ENCODE measurements at regions of chr1 and their contacts with region 1.

Region 1: GRCh38 chr1:8825985-8826481 is 8.6 kb upstream of the RERE start:
- DNase-seq: no peak
- ATAC-seq: no peak
- H3K4me3 ChIP-seq: no peak overlapping the region
- H3K27ac ChIP-seq: peak overlapping the region; percentile 57; the same call in 1 of the 2 replicates
- H3K4me1 ChIP-seq: peaks cover 31% of the 10 kb centered on the region
- H3K27me3 ChIP-seq: no peaks in the 10 kb centered on the region
- CTCF ChIP-seq: no peak

Region 2: GRCh38 chr1:8661185-8662110 is 164.6 kb before region 1 on chr1:
- CTCF ChIA-PET with region 1: interaction called, 12 read pairs
- POLR2A ChIA-PET with region 1: no interaction called
- in situ Hi-C with region 1: no loop called
- intact Hi-C with region 1: no loop called
- DNase-seq: peak; percentile 79
- ATAC-seq: peak; percentile 57
- H3K4me3 ChIP-seq: no peak overlapping the region
- H3K27ac ChIP-seq: peak overlapping the region; percentile 5
- H3K4me1 ChIP-seq: peaks cover 62% of the 10 kb centered on the region
- H3K27me3 ChIP-seq: no peaks in the 10 kb centered on the region
- CTCF ChIP-seq: no peak

Region 3: DNA sequence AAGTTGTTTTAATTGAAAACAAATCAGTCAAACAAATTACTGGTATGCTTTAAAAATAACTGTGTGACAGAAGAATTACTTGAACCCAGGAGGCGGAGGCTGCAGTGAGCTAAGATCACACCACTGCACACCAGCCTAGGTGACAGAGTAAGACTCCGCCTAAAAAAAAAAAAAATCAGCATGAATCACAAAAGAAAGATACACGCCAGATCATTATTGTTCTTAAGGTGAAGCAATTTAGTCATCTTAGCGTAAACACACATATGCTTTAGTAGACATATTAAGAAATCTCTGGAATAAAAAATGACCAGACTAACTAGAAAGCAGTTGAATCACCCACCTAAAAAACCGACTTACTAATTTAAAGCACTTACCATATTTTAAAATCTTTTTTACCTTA is 28.8 kb before region 1 on chr1:
- CTCF ChIA-PET with region 1: no interaction called
- POLR2A ChIA-PET with region 1: no interaction called
- in situ Hi-C with region 1: no loop called
- intact Hi-C with region 1: no loop called
- DNase-seq: no peak
- ATAC-seq: no peak
- H3K4me3 ChIP-seq: no peak overlapping the region
- H3K27ac ChIP-seq: no peak overlapping the region
- H3K4me1 ChIP-seq: no peaks in the 10 kb centered on the region
- H3K27me3 ChIP-seq: no peaks in the 10 kb centered on the region
- CTCF ChIP-seq: no peak

Region 4: DNA sequence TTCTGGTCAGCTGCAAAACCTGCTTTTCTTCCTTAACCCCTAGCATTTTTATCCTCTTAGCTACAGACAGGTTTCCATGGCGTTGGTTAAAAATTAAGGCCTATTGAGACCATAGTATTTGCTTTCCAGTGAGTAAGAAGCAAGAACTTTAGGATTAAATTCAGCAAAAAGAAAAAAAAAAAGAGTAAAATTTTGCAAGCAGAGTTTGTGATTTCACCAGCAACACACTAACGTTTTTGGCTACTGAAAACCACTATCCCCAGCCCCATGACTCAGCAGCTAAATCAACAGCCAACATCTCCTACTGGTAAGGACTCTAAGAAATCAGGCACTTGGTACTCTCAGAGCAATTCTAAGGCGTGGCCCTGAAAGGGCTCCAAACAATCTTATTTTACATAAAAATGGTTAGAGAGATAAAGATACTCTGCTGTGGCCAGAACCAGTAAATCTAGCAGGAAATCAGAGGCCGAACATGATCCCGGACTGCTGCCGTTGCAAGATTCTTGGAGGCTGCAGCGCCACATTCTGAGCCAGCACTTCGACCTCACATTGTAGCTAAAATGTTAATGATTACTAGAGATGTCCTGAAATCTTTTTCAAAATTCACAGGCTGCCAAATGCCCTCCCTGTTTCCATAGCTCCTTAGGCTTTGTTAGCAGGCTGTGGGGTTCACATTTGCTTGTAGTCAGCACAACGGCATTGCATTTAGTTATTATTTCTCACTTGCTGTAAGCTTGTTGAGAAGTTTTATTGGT is 54.1 kb after region 1 on chr1:
- CTCF ChIA-PET with region 1: no interaction called
- POLR2A ChIA-PET with region 1: no interaction called
- in situ Hi-C with region 1: no loop called
- intact Hi-C with region 1: no loop called
- DNase-seq: peak; percentile 75
- ATAC-seq: no peak
- H3K4me3 ChIP-seq: peak overlapping the region; percentile 94 to 97
- H3K27ac ChIP-seq: peak overlapping the region; percentile 100
- H3K4me1 ChIP-seq: peaks cover 32% of the 10 kb centered on the region
- H3K27me3 ChIP-seq: no peaks in the 10 kb centered on the region
- CTCF ChIP-seq: no peak